ENCODE measurements at regions of chr1 and their contacts with region 1.

Region 1: GRCh38 chr1:209618756-209619420 is 33.3 kb downstream of the LAMB3 start:
- DNase-seq: no peak
- ATAC-seq: no peak
- H3K4me3 ChIP-seq: no peak overlapping the region
- H3K27ac ChIP-seq: no peak overlapping the region
- H3K4me1 ChIP-seq: no peaks in the 10 kb centered on the region
- H3K27me3 ChIP-seq: peaks cover 0 to 4% of the 10 kb centered on the region in 2 experiments; a peak in 2 of 4 replicates
- CTCF ChIP-seq: no peak
- EP300 ChIP-seq: no peak
- POLR2A ChIP-seq: no peak
- RAD21 ChIP-seq: no peak

Region 2: DNA sequence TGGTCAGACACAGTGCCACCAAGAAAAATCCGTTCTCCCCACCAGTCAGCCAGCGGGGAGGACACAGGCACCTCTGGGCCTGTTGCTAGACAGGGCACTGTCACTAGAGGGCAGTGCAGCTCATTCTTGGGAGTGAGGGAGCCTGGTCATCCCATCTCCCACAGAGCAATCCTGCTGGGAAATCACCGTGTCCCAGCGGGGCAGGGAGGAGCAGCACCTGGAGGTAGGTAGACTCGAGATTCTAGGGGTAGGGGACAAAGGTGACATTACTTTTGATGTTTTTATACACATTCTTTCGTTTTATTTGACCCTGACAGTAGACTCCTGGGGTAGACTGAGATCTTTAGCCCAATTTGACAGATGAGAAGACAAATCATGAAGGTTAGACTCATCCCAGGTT is 42.1 kb before region 1 on chr1:
- CTCF ChIA-PET with region 1: interaction called, 10 read pairs
- POLR2A ChIA-PET with region 1: interaction called, 3 read pairs
- RAD21 ChIA-PET with region 1: no interaction called
- SMC1A ChIA-PET with region 1: interaction called, 3 read pairs
- in situ Hi-C with region 1: loop called (anchors 10 kb)
- intact Hi-C with region 1: no loop called
- DNase-seq: peak; percentile 12
- ATAC-seq: peak; percentile 99
- H3K4me3 ChIP-seq: no peak overlapping the region
- H3K27ac ChIP-seq: no peak overlapping the region
- H3K4me1 ChIP-seq: no peaks in the 10 kb centered on the region
- H3K27me3 ChIP-seq: peaks cover under 1 to 1% of the 10 kb centered on the region in 2 experiments; a peak in 3 of 4 replicates
- CTCF ChIP-seq: peak; percentile 93 to 96 (median 94)
- EP300 ChIP-seq: no peak
- POLR2A ChIP-seq: no peak
- RAD21 ChIP-seq: peak; percentile 86

Region 3: GRCh38 chr1:209601809-209602657 is 16.9 kb before region 1 on chr1:
- CTCF ChIA-PET with region 1: interaction called, 211 read pairs
- POLR2A ChIA-PET with region 1: no interaction called
- RAD21 ChIA-PET with region 1: interaction called, 12 read pairs
- SMC1A ChIA-PET with region 1: interaction called, 17 read pairs
- in situ Hi-C with region 1: no loop called
- intact Hi-C with region 1: no loop called
- DNase-seq: no peak
- ATAC-seq: peak; percentile 95
- H3K4me3 ChIP-seq: no peak overlapping the region
- H3K27ac ChIP-seq: no peak overlapping the region
- H3K4me1 ChIP-seq: peaks cover under 1% of the 10 kb centered on the region; the same call in 1 of the 2 replicates
- H3K27me3 ChIP-seq: no peaks in the 10 kb centered on the region
- CTCF ChIP-seq: peak; percentile 64 to 82 (median 70); a peak in 5 of 6 replicates
- EP300 ChIP-seq: no peak
- POLR2A ChIP-seq: no peak
- RAD21 ChIP-seq: peak; percentile 67

Region 4: GRCh38 chr1:209607102-209607794 is 11.6 kb before region 1 on chr1:
- CTCF ChIA-PET with region 1: interaction called, 211 read pairs
- POLR2A ChIA-PET with region 1: interaction called, 6 read pairs
- RAD21 ChIA-PET with region 1: interaction called, 10 read pairs
- SMC1A ChIA-PET with region 1: interaction called, 17 read pairs
- in situ Hi-C with region 1: no loop called
- intact Hi-C with region 1: no loop called
- DNase-seq: peak; percentile 48
- ATAC-seq: peak; percentile 93
- H3K4me3 ChIP-seq: no peak overlapping the region
- H3K27ac ChIP-seq: peak overlapping the region; percentile 45; the same call in 1 of the 2 replicates
- H3K4me1 ChIP-seq: peaks cover 10% of the 10 kb centered on the region
- H3K27me3 ChIP-seq: no peaks in the 10 kb centered on the region
- CTCF ChIP-seq: no peak
- EP300 ChIP-seq: no peak
- POLR2A ChIP-seq: no peak
- RAD21 ChIP-seq: no peak